Psoas muscle (tissue), 8 donors: ENCODE measurements at regions of chr11 and their contacts with region 1.

Region 1: GRCh38 chr11:65314501-65315203 is at the start of gene CDC42EP2:
- DNase-seq: peak; percentile 90 to 94
- ATAC-seq: peak; percentile 91 to 98 (median 94)
- H3K4me3 ChIP-seq: peak within 1 kb of the TSS; percentile 78
- H3K27ac ChIP-seq: peak within 1 kb of the TSS; percentile 80
- H3K4me1 ChIP-seq: peaks cover 15% of the 10 kb centered on the region
- H3K27me3 ChIP-seq: no peaks in the 10 kb centered on the region
- CTCF ChIP-seq: no peak
- total RNA-seq, gene CDC42EP2: 4.9 to 7.3 (median 6.8) TPM

Region 2: GRCh38 chr11:65274735-65275682 is 39.6 kb before region 1 on chr11:
- intact Hi-C with region 1: loop called (anchors 1 kb)
- DNase-seq: peak; percentile 61 to 79
- ATAC-seq: peak; percentile 87 to 94 (median 92)
- H3K4me3 ChIP-seq: no peak overlapping the region
- H3K27ac ChIP-seq: no peak overlapping the region
- H3K4me1 ChIP-seq: peaks cover 3% of the 10 kb centered on the region
- H3K27me3 ChIP-seq: no peaks in the 10 kb centered on the region
- CTCF ChIP-seq: peak; percentile 93